GM12878 (cell line): ENCODE measurements at regions of chr4 and their contacts with region 1.

Region 1: GRCh38 chr4:89056953-89057398 is at the start of gene FAM13A:
- DNase-seq: peak; percentile 44
- ATAC-seq: peak; percentile 73
- H3K4me3 ChIP-seq: peak within 1 kb of the TSS; percentile 26; the same call in 1 of the 2 replicates
- H3K27ac ChIP-seq: peak within 1 kb of the TSS; percentile 13; the same call in 1 of the 2 replicates
- H3K4me1 ChIP-seq: no peaks in the 10 kb centered on the region
- H3K27me3 ChIP-seq: no peaks in the 10 kb centered on the region
- CTCF ChIP-seq: no peak
- EP300 ChIP-seq: no peak
- POLR2A ChIP-seq: no peak
- RAD21 ChIP-seq: no peak
- polyA plus RNA-seq, gene FAM13A: 0.09 to 0.27 TPM

Region 2: DNA sequence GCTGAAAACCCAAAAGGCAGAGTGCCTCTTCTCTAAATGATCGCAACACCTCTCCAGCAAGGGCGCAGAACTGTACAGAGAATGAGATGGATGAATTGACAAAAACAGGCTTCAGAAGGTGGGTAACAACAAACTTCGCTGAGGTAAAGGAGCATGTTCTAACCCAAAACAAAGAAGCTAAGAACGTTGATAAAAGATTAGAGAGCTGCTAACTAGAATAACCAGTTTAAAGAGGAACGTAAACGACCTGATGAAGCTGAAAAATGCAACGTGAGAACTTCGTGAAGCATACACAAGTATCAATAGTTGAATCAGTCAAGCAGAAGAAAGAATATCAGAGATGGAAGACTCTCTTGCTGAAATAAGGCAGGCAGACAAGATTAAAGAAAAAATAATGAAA is 421.9 kb before region 1 on chr4:
- CTCF ChIA-PET with region 1: no interaction called
- POLR2A ChIA-PET with region 1: no interaction called
- RAD21 ChIA-PET with region 1: no interaction called
- SMC1A ChIA-PET with region 1: no interaction called
- in situ Hi-C with region 1: no loop called
- intact Hi-C with region 1: no loop called
- DNase-seq: no peak
- ATAC-seq: no peak
- H3K4me3 ChIP-seq: no peak overlapping the region
- H3K27ac ChIP-seq: no peak overlapping the region
- H3K4me1 ChIP-seq: no peaks in the 10 kb centered on the region
- H3K27me3 ChIP-seq: no peaks in the 10 kb centered on the region
- CTCF ChIP-seq: no peak
- EP300 ChIP-seq: no peak
- POLR2A ChIP-seq: no peak
- RAD21 ChIP-seq: no peak

Region 3: GRCh38 chr4:89009115-89009514 is 47.9 kb before region 1 on chr4:
- CTCF ChIA-PET with region 1: no interaction called
- POLR2A ChIA-PET with region 1: no interaction called
- RAD21 ChIA-PET with region 1: no interaction called
- SMC1A ChIA-PET with region 1: no interaction called
- in situ Hi-C with region 1: no loop called
- intact Hi-C with region 1: no loop called
- DNase-seq: no peak
- ATAC-seq: no peak
- H3K4me3 ChIP-seq: no peak overlapping the region
- H3K27ac ChIP-seq: no peak overlapping the region
- H3K4me1 ChIP-seq: no peaks in the 10 kb centered on the region
- H3K27me3 ChIP-seq: no peaks in the 10 kb centered on the region
- CTCF ChIP-seq: no peak
- EP300 ChIP-seq: no peak
- POLR2A ChIP-seq: no peak
- RAD21 ChIP-seq: no peak

Region 4: GRCh38 chr4:89039730-89040338 is 17.1 kb before region 1 on chr4:
- CTCF ChIA-PET with region 1: interaction called, 7 read pairs
- POLR2A ChIA-PET with region 1: no interaction called
- RAD21 ChIA-PET with region 1: interaction called, 3 read pairs
- SMC1A ChIA-PET with region 1: interaction called, 21 read pairs
- in situ Hi-C with region 1: no loop called
- intact Hi-C with region 1: no loop called
- DNase-seq: no peak
- ATAC-seq: no peak
- H3K4me3 ChIP-seq: no peak overlapping the region
- H3K27ac ChIP-seq: no peak overlapping the region
- H3K4me1 ChIP-seq: no peaks in the 10 kb centered on the region
- H3K27me3 ChIP-seq: no peaks in the 10 kb centered on the region
- CTCF ChIP-seq: no peak
- EP300 ChIP-seq: no peak
- POLR2A ChIP-seq: no peak
- RAD21 ChIP-seq: no peak

Region 5: DNA sequence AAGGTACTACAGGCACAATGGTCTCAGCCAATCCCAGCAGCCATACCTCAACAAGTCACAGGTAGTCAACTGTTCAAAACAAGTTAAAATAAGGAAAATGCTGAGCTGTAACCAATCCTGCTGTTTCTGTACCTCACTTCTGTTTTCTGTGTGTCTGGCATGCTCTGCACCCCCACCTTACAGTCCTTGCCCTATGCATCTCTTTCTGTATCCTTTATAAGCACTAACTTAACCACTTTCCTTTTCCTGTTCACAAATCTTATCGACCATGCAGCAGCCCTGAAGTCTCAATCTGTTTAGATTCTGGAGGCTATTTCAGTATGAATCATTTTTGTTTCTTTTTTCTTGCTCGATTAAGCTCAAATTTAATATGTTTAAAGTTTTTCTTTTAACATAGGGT is 12.5 kb after region 1 on chr4:
- CTCF ChIA-PET with region 1: interaction called, 12 read pairs
- POLR2A ChIA-PET with region 1: interaction called, 18 read pairs
- RAD21 ChIA-PET with region 1: interaction called, 64 read pairs
- SMC1A ChIA-PET with region 1: interaction called, 58 read pairs
- in situ Hi-C with region 1: no loop called
- intact Hi-C with region 1: no loop called
- DNase-seq: peak; percentile 40
- ATAC-seq: peak; percentile 89
- H3K4me3 ChIP-seq: no peak overlapping the region
- H3K27ac ChIP-seq: no peak overlapping the region
- H3K4me1 ChIP-seq: no peaks in the 10 kb centered on the region; the same call in 1 of the 2 replicates
- H3K27me3 ChIP-seq: no peaks in the 10 kb centered on the region
- CTCF ChIP-seq: no peak
- EP300 ChIP-seq: no peak
- POLR2A ChIP-seq: no peak
- RAD21 ChIP-seq: no peak

Region 6: GRCh38 chr4:89077761-89078160 is 20.8 kb after region 1 on chr4:
- CTCF ChIA-PET with region 1: no interaction called
- POLR2A ChIA-PET with region 1: interaction called, 4 read pairs
- RAD21 ChIA-PET with region 1: interaction called, 5 read pairs
- SMC1A ChIA-PET with region 1: interaction called, 10 read pairs
- in situ Hi-C with region 1: no loop called
- intact Hi-C with region 1: no loop called
- DNase-seq: no peak
- ATAC-seq: no peak
- H3K4me3 ChIP-seq: no peak overlapping the region
- H3K27ac ChIP-seq: no peak overlapping the region
- H3K4me1 ChIP-seq: peaks cover 11% of the 10 kb centered on the region
- H3K27me3 ChIP-seq: no peaks in the 10 kb centered on the region
- CTCF ChIP-seq: no peak
- EP300 ChIP-seq: no peak
- POLR2A ChIP-seq: no peak
- RAD21 ChIP-seq: no peak

Region 7: GRCh38 chr4:89101256-89102161 is 44.5 kb after region 1 on chr4:
- CTCF ChIA-PET with region 1: interaction called, 9 read pairs
- POLR2A ChIA-PET with region 1: interaction called, 15 read pairs
- RAD21 ChIA-PET with region 1: interaction called, 40 read pairs
- SMC1A ChIA-PET with region 1: interaction called, 58 read pairs
- in situ Hi-C with region 1: no loop called
- intact Hi-C with region 1: no loop called
- DNase-seq: peak; percentile 86
- ATAC-seq: peak; percentile 98
- H3K4me3 ChIP-seq: peak overlapping the region; percentile 10; the same call in 1 of the 2 replicates
- H3K27ac ChIP-seq: peak overlapping the region; percentile 95
- H3K4me1 ChIP-seq: peaks cover 7% of the 10 kb centered on the region
- H3K27me3 ChIP-seq: no peaks in the 10 kb centered on the region
- CTCF ChIP-seq: no peak
- EP300 ChIP-seq: peak; percentile 48 to 53; a peak in 1 of 4 replicates
- POLR2A ChIP-seq: no peak
- RAD21 ChIP-seq: no peak

Region 8: DNA sequence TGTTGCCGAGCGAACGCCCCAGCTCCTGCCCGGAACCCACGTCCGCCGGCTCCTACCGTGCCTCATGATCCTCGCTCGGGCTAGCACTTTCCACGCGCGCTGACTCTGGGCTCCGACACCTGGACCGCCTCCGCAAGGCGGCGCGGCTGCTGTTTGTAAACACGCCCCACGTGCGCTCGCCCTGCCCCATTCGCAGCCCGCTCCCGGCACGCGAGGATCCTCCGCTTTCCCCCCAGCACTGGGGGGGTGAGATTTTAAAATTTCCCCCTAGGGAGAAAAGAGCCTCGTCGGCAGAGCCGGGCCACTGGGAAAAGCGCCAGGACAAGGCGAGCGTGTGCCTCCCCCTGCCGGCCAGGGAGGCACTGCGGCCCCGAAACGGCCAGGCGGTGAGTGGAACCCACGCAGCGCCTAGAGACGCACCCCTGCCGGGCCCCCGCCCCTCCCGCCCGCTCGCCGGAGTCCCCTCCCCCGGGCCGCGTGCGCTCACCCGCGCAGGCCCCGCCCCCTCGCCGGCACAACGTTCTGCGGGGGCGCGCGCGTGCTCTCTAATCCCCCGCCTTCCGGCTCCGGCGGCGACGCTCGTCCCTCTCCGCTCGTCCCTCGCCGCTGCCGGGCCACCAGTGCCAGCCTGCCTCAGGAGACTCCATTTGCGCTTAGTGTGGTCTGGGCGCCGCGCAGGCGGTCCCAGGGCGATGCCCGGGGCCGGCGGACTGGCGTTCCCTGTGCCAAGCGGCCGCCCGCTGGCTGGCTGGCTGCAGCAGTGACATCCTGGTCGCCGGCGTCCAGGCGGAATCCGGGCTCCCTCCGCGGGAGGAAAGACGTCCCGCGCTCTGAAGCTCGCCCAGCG is 54.2 kb after region 1 on chr4 and contains the start of gene TIGD2:
- CTCF ChIA-PET with region 1: interaction called, 7 read pairs
- POLR2A ChIA-PET with region 1: interaction called, 3 read pairs
- RAD21 ChIA-PET with region 1: interaction called, 3 read pairs
- SMC1A ChIA-PET with region 1: interaction called, 6 read pairs
- in situ Hi-C with region 1: no loop called
- intact Hi-C with region 1: loop called (anchors 2 kb)
- DNase-seq: peak; percentile 47
- ATAC-seq: peak; percentile 94
- H3K4me3 ChIP-seq: peak within 1 kb of the TSS; percentile 95
- H3K27ac ChIP-seq: peak within 1 kb of the TSS; percentile 47
- H3K4me1 ChIP-seq: 0 out of 2 replicates have a peak, but pooled peaks cover 3% of the 10 kb centered on the region
- H3K27me3 ChIP-seq: no peaks in the 10 kb centered on the region
- CTCF ChIP-seq: peak; percentile 66 to 83 (median 75)
- EP300 ChIP-seq: no peak
- POLR2A ChIP-seq: peak; percentile 98
- RAD21 ChIP-seq: peak; percentile 60
- polyA plus RNA-seq, gene TIGD2: 2.4 to 3.6 TPM

Region 9: GRCh38 chr4:89230271-89230670 is 173.3 kb after region 1 on chr4:
- CTCF ChIA-PET with region 1: no interaction called
- POLR2A ChIA-PET with region 1: no interaction called
- RAD21 ChIA-PET with region 1: no interaction called
- SMC1A ChIA-PET with region 1: no interaction called
- in situ Hi-C with region 1: no loop called
- intact Hi-C with region 1: no loop called
- DNase-seq: no peak
- ATAC-seq: no peak
- H3K4me3 ChIP-seq: no peak overlapping the region
- H3K27ac ChIP-seq: no peak overlapping the region
- H3K4me1 ChIP-seq: no peaks in the 10 kb centered on the region
- H3K27me3 ChIP-seq: no peaks in the 10 kb centered on the region; a peak in 1 of 4 replicates
- CTCF ChIP-seq: no peak
- EP300 ChIP-seq: no peak
- POLR2A ChIP-seq: no peak
- RAD21 ChIP-seq: no peak

Region 10: GRCh38 chr4:90855111-90855510 is 1798.1 kb after region 1 on chr4:
- CTCF ChIA-PET with region 1: no interaction called
- POLR2A ChIA-PET with region 1: no interaction called
- RAD21 ChIA-PET with region 1: no interaction called
- SMC1A ChIA-PET with region 1: no interaction called
- in situ Hi-C with region 1: no loop called
- intact Hi-C with region 1: no loop called
- DNase-seq: no peak
- ATAC-seq: no peak
- H3K4me3 ChIP-seq: no peak overlapping the region
- H3K27ac ChIP-seq: no peak overlapping the region
- H3K4me1 ChIP-seq: no peaks in the 10 kb centered on the region
- H3K27me3 ChIP-seq: no peaks in the 10 kb centered on the region
- CTCF ChIP-seq: no peak
- EP300 ChIP-seq: no peak
- POLR2A ChIP-seq: no peak
- RAD21 ChIP-seq: no peak